HepG2 (cell line): ENCODE measurements at regions of chr3 and their contacts with region 1.

Region 1: GRCh38 chr3:124467980-124468902 is 262.0 kb upstream of the UMPS start:
- DNase-seq: peak; percentile 20
- ATAC-seq: peak; percentile 90
- H3K4me3 ChIP-seq: no peak overlapping the region
- H3K27ac ChIP-seq: no peak overlapping the region
- H3K4me1 ChIP-seq: no peaks in the 10 kb centered on the region
- H3K27me3 ChIP-seq: peaks cover 0 to 5% of the 10 kb centered on the region in 2 experiments; a peak in 1 of 5 replicates
- CTCF ChIP-seq: peak; percentile 89
- EP300 ChIP-seq: no peak
- POLR2A ChIP-seq: no peak
- RAD21 ChIP-seq: peak; percentile 79

Region 2: GRCh38 chr3:124358156-124358555 is 110.1 kb before region 1 on chr3:
- CTCF ChIA-PET with region 1: interaction called, 17 read pairs
- POLR2A ChIA-PET with region 1: no interaction called
- in situ Hi-C with region 1: loop called (anchors 5 kb)
- intact Hi-C with region 1: no loop called
- DNase-seq: no peak
- ATAC-seq: no peak
- H3K4me3 ChIP-seq: no peak overlapping the region
- H3K27ac ChIP-seq: no peak overlapping the region
- H3K4me1 ChIP-seq: no peaks in the 10 kb centered on the region
- H3K27me3 ChIP-seq: no peaks in the 10 kb centered on the region; a peak in 1 of 5 replicates
- CTCF ChIP-seq: no peak
- EP300 ChIP-seq: no peak
- POLR2A ChIP-seq: no peak
- RAD21 ChIP-seq: no peak

Region 3: DNA sequence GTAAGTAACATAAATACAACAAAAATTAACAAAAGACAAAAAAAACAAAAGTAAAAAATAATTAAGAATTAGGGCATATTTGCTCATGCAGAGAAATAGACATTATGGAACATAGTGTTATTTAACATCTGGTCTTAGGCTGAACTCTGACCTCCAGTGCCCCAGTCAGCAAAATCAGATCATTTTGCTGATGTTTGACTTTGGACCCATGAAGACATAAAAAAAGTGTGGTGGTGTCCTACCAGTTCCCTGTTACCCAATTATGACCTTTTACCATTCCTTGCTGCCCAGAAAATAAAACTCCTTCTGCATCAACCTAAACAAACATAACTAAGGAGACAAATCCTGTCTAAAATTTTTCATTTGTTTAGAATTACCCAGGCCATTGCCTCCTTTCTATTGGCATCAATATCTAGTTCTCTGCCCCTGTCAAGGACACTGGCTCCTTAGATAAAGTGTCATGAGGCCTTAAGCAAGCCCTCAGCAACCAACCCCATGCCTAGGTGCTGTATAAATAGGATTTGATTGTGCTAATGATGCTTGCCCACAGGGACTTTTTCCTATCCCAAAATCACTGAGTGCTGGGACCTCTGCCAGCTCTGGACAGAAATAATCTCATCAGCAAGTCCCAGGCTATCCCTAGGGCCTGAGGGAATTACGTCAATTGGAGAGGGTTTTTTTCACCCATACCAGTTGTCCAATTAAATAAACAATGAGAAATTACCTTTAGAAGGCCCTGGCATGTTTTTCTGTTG is 72.5 kb before region 1 on chr3:
- CTCF ChIA-PET with region 1: no interaction called
- POLR2A ChIA-PET with region 1: no interaction called
- in situ Hi-C with region 1: no loop called
- intact Hi-C with region 1: no loop called
- DNase-seq: no peak
- ATAC-seq: no peak
- H3K4me3 ChIP-seq: no peak overlapping the region
- H3K27ac ChIP-seq: no peak overlapping the region
- H3K4me1 ChIP-seq: no peaks in the 10 kb centered on the region
- H3K27me3 ChIP-seq: no peaks in the 10 kb centered on the region
- CTCF ChIP-seq: no peak
- EP300 ChIP-seq: no peak
- POLR2A ChIP-seq: no peak
- RAD21 ChIP-seq: no peak

Region 4: DNA sequence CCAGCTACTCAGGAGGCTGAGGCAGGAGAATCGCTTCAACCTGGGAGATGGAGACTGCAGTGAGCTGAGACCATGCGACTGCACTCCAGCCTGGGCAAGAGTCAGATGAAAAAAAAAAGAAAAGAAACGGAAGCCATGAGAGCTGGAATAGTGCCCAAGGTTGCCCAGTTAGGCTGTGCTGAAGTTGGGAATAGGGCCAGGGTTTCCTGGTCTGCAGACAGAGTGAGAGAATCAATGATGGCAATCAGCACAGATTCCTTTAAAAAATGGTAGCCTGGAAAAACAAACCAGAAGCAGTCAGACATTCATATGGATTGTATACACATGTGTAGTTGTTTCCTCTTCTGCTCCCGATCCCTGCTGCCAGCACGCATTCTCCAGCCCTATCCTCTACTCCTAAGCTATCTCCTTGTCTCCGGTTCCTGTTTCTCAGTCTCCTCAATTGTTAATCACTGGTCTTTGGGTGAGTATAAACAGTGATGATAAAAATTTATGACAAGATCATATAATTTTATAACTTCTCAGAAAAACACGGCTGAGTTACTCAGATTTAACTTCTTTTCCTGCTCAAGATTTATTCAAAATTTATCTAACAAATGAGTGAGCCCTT is 54.1 kb before region 1 on chr3:
- CTCF ChIA-PET with region 1: no interaction called
- POLR2A ChIA-PET with region 1: no interaction called
- in situ Hi-C with region 1: no loop called
- intact Hi-C with region 1: no loop called
- DNase-seq: no peak
- ATAC-seq: no peak
- H3K4me3 ChIP-seq: no peak overlapping the region
- H3K27ac ChIP-seq: no peak overlapping the region
- H3K4me1 ChIP-seq: no peaks in the 10 kb centered on the region
- H3K27me3 ChIP-seq: peaks cover 1 to 4% of the 10 kb centered on the region in 2 experiments; a peak in 3 of 5 replicates
- CTCF ChIP-seq: no peak
- EP300 ChIP-seq: no peak
- POLR2A ChIP-seq: no peak
- RAD21 ChIP-seq: no peak